Activated CD4-positive, alpha-beta memory T cell treated with anti-CD3 and anti-CD28 coated beads for 36 hours (primary cell): ENCODE measurements at regions of chr3 and their contacts with region 1.

Region 1: DNA sequence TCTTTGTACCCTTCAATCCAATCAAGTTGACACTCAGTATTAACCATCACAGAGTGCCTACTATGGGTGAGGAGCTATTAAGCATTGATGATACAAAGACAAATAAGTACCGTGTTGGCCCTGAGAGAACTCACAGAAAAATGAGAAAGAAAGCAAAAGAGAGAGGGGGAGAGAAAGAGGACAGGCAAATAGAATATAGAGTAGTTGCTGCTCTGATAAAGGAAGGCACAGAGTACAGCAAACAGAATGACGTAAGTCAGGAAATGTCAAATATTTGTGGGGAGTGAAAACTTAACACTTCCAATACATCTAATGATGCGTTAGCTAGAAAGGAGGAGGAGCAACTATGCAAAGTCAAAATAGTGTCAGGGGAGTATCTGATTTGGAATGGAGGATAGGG is 320.6 kb upstream of the KCNH8 start:
- DNase-seq: no peak
- H3K4me3 Mint-ChIP-seq: no peak overlapping the region
- H3K27ac Mint-ChIP-seq: no peak overlapping the region
- H3K4me1 Mint-ChIP-seq: peaks cover 7% of the 10 kb centered on the region
- H3K27me3 Mint-ChIP-seq: no peaks in the 10 kb centered on the region

Region 2: DNA sequence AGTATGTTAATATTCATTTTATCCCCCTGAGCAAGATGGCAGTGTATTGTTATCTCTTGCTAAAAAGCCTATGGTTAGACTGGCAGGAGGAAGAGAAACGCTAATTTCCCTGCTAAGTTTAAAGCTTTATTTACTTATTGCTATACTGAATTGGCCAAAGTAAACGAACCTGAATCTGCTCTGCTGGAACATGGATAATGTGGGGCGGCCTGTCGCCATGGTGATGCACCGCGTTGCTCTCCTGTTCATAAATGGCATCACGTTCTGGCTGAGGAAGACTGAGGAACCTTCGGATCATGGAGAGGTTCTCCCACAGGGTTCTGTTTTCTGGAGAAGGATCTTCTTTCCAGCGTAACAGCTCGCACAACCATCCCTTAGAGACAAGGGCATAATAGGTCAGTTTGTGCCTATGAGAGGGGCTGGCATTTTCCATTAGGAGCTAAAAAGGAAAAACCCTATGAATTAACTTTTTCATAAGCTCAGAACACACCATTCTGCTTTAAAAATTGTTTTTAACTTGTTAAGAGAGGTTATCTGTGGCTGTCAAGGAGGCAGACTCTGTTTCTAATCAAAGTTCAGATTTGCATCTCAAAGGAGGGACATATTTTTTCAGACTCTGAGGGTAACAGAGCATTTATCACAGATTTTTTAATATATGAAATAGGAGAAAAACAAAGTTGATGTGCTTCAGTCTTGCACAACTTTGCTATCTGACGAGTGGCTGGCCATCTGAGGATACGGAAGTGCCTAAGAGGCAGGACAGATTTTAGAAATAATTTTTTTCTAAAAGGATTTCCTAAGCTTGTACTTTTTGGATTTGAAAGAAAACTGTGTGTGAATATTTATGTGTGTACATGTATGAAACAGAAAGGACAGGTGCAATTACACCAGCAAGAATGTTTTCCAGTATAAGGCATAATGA is 475.6 kb before region 1 on chr3:
- CTCF ChIA-PET with region 1: no interaction called
- POLR2A ChIA-PET with region 1: no interaction called
- intact Hi-C with region 1: no loop called
- DNase-seq: peak; percentile 16
- H3K4me3 Mint-ChIP-seq: peak overlapping the region; percentile 57
- H3K27ac Mint-ChIP-seq: peak overlapping the region; percentile 77
- H3K4me1 Mint-ChIP-seq: peaks cover 21% of the 10 kb centered on the region
- H3K27me3 Mint-ChIP-seq: peaks cover 2% of the 10 kb centered on the region

Region 3: DNA sequence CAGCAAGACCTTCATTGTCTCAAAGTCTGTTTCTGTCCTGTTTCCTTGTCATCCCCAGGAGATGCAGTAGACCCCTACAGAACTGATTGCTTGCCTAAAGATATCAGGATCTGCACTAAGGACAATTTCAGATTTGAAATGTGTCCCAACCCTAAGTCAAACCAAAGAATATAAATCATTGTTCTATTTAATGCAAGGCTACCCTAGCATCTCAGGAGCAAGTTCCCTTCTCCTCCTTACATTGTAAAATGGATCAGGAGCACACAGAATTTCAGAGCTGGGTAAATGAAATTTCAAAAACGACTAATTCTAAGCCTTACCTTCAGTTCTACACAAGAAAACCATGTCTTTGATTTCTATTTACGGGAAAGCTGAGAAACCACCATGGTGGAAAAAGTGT is 40.2 kb before region 1 on chr3:
- CTCF ChIA-PET with region 1: no interaction called
- POLR2A ChIA-PET with region 1: interaction called, 3 read pairs
- intact Hi-C with region 1: loop called (anchors 2 kb)
- DNase-seq: no peak
- H3K4me3 Mint-ChIP-seq: no peak overlapping the region
- H3K27ac Mint-ChIP-seq: no peak overlapping the region
- H3K4me1 Mint-ChIP-seq: peaks cover 3% of the 10 kb centered on the region
- H3K27me3 Mint-ChIP-seq: no peaks in the 10 kb centered on the region